ENCODE measurements at regions of chr10 and their contacts with region 1.

Region 1: DNA sequence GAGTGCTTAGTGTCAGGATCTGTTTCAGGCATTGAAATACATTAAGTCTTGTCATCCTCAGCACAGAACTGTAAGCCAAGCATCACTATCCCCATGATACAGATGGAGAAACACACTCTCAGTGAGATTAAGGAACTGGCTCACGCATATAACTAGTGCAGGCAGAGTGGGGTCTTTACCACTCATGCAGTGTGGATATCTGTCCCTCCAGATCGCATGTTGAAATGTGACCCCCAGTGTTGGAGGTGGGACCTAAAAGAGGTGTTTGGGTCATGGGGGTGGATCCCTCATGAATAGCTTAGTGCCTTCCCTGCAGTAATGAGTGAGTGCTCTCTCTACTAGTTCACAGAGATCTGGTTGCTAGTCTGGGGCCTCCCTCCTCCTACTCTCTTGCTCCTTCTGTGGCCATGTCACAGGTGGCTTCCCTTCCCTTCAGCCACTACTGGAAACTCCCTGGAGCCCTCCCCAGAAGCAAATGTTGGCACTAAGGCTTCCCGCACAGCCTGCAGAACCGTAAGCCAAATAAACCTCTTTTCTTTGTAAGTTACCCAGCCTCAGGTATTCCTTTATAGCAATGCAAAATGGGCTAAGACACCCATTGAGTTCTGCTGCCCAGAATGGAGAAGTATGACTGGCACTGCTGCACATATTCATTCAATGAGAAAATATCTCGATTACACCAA is 31.8 kb upstream of the MSMB start:
- DNase-seq: peak in 2 of 3 donors; percentile 49 to 80
- H3K4me3 ChIP-seq: no peak overlapping the region
- H3K27ac ChIP-seq: peak overlapping the region; percentile 17 to 74
- H3K4me1 ChIP-seq: peaks cover 30 to 44% (median 41%) of the 10 kb centered on the region in 4 experiments
- H3K27me3 ChIP-seq: no peaks in the 10 kb centered on the region

Region 2: DNA sequence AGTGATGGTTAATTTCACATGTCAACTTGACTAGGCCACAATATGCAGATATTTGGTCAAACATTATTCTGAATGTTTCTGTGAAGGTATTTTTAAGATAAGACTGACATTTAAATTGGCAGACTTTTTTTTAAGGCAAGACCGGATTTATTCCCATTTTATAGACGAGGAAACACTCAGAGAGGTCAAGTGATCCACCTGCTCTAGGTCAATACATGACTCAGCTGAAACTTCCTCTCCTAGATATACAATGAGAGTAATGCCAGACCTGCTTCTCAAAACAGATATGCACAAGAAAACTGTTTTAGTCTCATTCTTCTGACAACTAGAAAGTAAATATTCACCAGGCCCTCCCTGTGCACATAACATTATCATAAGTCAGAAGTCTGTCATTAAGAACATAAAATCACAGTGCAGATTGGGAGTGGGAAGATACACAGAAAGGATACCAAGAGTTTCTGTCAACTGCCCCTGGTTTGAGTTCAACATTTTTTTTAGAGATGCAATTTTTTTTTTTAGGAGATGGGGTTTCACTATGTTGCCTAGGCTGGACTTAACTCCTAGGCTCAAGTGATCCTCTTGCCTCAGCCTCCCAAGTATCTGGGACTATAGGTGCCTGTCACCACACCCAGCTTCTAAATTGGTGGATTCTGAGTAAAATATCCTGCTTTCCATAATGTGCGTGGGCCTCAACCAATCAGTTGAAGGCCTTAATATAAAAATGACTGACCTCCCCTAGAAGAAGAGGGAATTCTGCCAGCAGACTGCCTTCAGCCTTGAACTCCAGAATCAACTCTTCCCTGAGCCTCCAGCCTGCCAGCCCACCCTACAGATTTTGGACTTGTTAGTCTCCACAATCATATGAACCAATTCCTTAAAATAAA is 526.7 kb before region 1 on chr10:
- CTCF ChIA-PET with region 1: no interaction called
- POLR2A ChIA-PET with region 1: no interaction called
- DNase-seq: peak in 1 of 3 donors; percentile 18
- H3K4me3 ChIP-seq: no peak overlapping the region
- H3K27ac ChIP-seq: no peak overlapping the region
- H3K4me1 ChIP-seq: peaks cover 0 to 5% (median 2%) of the 10 kb centered on the region in 4 experiments
- H3K27me3 ChIP-seq: no peaks in the 10 kb centered on the region

Region 3: GRCh38 chr10:45997994-45998763 is 79.7 kb before region 1 on chr10:
- CTCF ChIA-PET with region 1: no interaction called
- POLR2A ChIA-PET with region 1: no interaction called
- DNase-seq: no peak
- H3K4me3 ChIP-seq: no peak overlapping the region
- H3K27ac ChIP-seq: peak overlapping the region in 1 of 2 experiments; percentile 22
- H3K4me1 ChIP-seq: no peaks in the 10 kb centered on the region
- H3K27me3 ChIP-seq: no peaks in the 10 kb centered on the region

Region 4: DNA sequence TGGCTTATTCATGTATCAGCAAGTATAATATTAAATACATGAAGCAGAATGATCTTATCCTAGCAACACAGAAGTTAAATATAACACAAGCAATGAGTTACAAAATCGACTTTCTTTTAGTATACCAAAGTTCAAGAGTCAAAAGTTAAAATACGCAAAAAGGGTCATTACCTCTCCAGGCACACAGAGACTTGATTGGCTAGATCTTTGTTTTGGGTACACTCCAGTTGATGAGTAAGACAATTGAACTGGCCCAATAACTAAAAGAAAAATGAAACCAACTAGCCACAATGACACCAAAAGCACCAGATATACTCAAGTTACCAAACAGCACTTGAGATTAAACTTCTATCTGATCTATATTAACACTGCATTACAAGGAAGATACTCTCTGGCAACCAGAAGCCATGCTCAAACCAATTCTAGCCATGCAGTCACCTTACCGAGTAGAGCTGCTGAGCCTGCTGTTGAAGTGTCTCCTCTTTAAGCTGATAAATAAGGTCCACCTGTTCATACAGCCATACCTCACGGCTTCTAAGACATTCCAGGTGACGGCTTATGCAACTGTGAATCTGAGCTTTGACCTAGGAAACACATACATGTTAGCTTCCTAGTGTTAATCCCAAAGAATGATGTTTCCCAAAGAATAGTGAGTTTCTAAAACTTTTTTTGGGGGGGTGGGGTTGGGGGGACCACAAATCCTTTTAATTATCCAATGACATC is 63.0 kb before region 1 on chr10:
- CTCF ChIA-PET with region 1: no interaction called
- POLR2A ChIA-PET with region 1: no interaction called
- DNase-seq: no peak
- H3K4me3 ChIP-seq: no peak overlapping the region
- H3K27ac ChIP-seq: no peak overlapping the region
- H3K4me1 ChIP-seq: peaks cover 17 to 40% (median 26%) of the 10 kb centered on the region in 4 experiments
- H3K27me3 ChIP-seq: no peaks in the 10 kb centered on the region

Region 5: DNA sequence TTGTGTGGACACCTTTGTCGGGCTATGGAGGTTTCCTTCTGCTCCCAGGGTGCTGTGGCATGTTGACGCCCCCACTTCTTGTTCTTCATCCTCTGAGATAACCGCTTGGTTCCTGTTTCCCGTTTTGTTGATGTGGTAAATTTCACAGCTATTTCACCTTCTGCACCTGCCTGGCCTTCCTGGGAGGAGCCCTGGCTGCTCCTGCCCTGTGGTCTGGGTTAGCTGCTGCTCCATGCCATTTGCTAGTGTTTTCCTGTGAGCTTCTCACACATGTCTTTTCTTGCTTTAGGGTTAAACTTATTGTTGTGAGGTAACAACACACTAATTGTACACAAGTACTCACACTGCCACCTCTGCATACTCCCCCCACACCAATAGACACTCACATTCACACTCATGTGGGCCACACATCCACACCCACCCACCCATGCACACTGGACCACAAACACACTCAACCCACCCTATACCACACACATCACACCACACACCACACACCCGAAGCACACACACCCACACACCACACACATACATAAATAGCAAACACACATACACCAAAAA is 14.7 kb after region 1 on chr10:
- CTCF ChIA-PET with region 1: interaction called, 10 read pairs
- POLR2A ChIA-PET with region 1: interaction called, 4 read pairs
- DNase-seq: peak; percentile 80 to 94 (median 83)
- H3K4me3 ChIP-seq: peak overlapping the region in 3 of 7 experiments; percentile 13 to 42 (median 19)
- H3K27ac ChIP-seq: peak overlapping the region; percentile 57 to 84
- H3K4me1 ChIP-seq: peaks cover 0 to 81% (median 66%) of the 10 kb centered on the region in 4 experiments
- H3K27me3 ChIP-seq: no peaks in the 10 kb centered on the region